ENCODE measurements at regions of chr1 and their contacts with region 1.

Region 1: GRCh38 chr1:95146637-95147036 is 29.5 kb downstream of the TLCD4 start:
- DNase-seq: no peak
- H3K4me3 Mint-ChIP-seq: no peak overlapping the region
- H3K27ac Mint-ChIP-seq: no peak overlapping the region
- H3K4me1 Mint-ChIP-seq: peaks cover 6% of the 10 kb centered on the region
- H3K27me3 Mint-ChIP-seq: no peaks in the 10 kb centered on the region
- CTCF ChIP-seq: no peak

Region 2: DNA sequence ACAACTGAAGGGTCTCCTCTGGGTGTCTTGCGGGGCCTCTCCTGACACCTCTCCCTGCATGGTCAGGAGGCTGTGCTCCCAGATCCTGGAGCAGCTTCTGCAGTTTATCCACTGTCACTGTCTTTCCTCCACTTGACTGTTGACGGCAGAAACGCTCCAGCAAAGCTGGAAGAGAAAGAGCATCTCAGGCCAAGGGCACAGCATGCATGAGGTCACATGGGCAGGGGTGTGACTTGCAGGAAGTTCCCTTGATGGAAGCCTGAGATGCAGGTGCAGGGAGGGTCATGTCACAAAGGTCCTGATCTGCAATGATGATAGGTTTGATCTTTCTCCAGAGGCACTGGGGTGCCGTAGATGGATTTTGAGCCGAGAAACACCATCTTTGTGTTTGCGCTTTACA is 303.2 kb before region 1 on chr1:
- CTCF ChIA-PET with region 1: no interaction called
- intact Hi-C with region 1: no loop called
- DNase-seq: no peak
- H3K4me3 Mint-ChIP-seq: no peak overlapping the region
- H3K27ac Mint-ChIP-seq: no peak overlapping the region
- H3K4me1 Mint-ChIP-seq: no peaks in the 10 kb centered on the region
- H3K27me3 Mint-ChIP-seq: no peaks in the 10 kb centered on the region
- CTCF ChIP-seq: no peak

Region 3: GRCh38 chr1:95084317-95085176 is 62.1 kb before region 1 on chr1:
- CTCF ChIA-PET with region 1: no interaction called
- intact Hi-C with region 1: loop called (anchors 10 kb)
- DNase-seq: peak; percentile 22
- H3K4me3 Mint-ChIP-seq: no peak overlapping the region
- H3K27ac Mint-ChIP-seq: no peak overlapping the region
- H3K4me1 Mint-ChIP-seq: peaks cover 30% of the 10 kb centered on the region
- H3K27me3 Mint-ChIP-seq: no peaks in the 10 kb centered on the region
- CTCF ChIP-seq: peak; percentile 82